ENCODE measurements at regions of chr15 and their contacts with region 1.

Region 1: DNA sequence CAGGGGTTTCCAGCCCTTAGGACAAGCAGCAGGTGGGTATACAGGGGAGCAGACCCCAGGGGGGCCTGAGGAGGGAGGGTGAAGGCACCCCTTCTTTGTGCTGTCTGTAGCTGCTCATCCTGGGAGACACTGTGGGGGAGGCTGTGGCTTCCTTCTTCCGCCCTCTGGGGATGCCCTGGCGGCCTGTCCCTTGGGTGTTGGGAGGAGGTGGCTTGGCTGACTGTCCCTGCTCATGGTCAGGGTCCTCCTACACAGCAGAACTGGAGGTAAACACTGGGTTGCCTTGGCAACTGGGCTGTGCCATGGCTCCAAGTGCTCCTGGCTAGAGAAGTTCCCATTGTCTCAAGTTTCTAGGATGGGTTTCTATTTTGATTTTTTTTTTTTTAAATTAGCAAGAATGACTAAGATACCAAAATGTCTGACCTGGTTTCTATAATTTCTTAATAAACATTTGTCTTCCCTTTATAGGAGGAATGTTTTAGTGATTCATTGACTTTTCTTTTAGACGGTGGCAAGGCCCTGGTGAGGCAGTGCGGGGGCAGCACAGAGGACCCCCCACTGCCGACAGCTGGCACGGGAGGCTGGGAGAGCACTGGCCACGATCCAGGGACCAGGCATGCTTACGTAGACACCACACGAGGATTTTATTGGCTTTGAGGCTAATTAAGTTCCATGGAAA is 12.4 kb downstream of the KLF13 start:
- DNase-seq: peak; percentile 53 to 75
- H3K4me3 ChIP-seq: no peak overlapping the region
- H3K27ac ChIP-seq: peak overlapping the region; percentile 86 to 87
- H3K4me1 ChIP-seq: peaks cover 12 to 31% of the 10 kb centered on the region in 2 donors
- H3K27me3 ChIP-seq: no peaks in the 10 kb centered on the region
- CTCF ChIP-seq: no peak
- POLR2A ChIP-seq: no peak

Region 2: DNA sequence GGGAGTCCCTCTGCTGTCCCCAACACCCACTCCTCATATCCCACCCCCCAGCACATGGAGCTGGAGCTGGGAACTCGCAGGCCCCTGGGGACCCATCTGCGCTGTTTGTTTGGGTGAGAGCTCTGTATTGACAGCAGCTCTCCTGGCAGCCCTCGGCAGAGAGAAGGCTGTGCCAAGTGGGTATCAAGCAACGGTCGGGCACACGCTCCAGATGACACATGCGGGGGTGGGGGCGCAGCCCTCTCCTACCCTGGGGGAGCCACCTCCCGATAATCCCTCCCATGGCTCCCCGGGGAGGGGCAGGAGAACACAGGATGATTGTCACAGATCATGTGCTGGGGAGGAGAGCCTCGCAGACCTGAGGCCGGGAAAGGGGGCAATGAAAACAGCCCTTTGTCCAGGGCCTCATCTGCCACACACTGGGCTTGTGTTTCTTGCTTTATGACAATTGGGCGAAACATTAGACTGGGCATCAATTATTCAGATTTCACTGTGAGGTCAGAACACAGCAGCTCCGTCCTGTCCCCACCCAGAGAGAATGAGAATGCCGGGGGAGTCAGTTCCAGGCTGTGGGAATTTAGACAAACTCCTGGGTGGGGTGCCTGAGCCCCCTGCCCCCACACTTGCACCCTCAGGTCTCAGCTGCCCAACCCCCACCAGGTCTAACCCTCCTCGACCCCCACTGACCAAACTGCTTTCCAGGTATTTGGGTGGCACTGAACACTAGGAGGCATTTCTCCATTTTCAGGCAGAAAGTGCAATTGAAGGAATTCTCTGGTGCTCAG is 58.8 kb before region 1 on chr15:
- intact Hi-C with region 1: no loop called
- DNase-seq: peak in 1 of 2 donors; percentile 8
- H3K4me3 ChIP-seq: no peak overlapping the region
- H3K27ac ChIP-seq: no peak overlapping the region
- H3K4me1 ChIP-seq: no peaks in the 10 kb centered on the region
- H3K27me3 ChIP-seq: no peaks in the 10 kb centered on the region
- CTCF ChIP-seq: no peak
- POLR2A ChIP-seq: no peak

Region 3: DNA sequence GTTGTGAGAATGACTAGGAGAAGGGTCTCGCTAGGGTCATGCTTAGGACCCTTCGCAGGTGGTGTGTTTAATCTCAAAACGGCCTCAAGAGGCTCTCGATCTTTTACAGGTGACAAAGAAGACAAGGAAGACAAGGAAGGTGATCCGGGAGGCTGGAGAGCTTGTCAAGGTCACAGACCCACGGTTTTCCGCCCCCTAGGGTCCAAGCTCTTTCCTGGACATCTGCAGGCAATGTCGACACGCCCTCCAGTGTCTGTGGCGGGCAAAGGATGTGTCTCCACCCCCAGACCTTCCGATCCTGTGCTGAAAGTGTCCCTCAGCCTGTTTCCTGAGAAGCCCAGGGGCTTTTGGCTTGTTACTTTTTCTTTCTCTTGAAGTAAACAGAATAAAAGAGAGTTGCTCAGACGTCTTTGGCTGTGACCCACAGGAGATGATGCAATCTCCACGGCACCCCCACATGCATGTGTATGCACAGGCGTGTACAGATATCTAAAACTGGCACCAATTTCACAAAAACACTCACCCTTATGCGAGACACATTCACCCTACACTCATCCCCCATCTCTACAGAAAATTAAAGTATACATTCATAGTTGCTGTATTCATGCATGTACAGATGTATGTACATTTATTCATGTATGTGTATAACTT is 96.4 kb after region 1 on chr15:
- intact Hi-C with region 1: loop called (anchors 10 kb)
- DNase-seq: peak; percentile 65 to 87
- H3K4me3 ChIP-seq: no peak overlapping the region
- H3K27ac ChIP-seq: peak overlapping the region; percentile 79 to 88
- H3K4me1 ChIP-seq: peaks cover 0 to 9% of the 10 kb centered on the region in 2 donors
- H3K27me3 ChIP-seq: no peaks in the 10 kb centered on the region
- CTCF ChIP-seq: peak; percentile 69 to 75 (median 72)
- POLR2A ChIP-seq: no peak

Region 4: DNA sequence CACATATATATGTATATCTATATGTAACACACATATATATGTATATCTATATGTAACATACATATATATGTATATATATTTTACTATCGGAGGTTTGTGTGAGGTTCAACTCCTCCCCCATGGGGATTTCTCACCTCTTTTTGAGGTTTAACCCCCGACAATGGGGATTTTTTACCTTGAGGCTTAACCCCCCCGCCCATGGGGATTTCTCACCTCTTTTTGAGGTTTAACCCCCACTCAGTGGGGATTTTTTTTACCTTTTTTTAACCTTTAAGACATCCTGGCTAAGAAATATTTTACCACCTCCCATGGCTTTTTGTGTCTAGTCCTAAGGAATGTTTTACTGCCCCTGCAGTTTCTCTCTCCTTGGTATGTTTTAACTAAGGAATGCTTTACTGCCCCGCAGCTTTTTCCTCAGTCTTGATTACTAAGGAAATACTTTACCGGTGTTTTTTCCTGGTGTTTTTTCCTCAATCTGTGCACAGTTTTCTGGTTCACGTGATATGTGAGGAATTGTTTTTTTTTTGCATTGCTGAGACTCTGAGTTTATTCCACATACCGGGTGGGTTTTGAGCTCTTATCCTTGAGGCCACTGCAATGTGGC is 172.8 kb after region 1 on chr15:
- intact Hi-C with region 1: no loop called
- DNase-seq: no peak
- H3K4me3 ChIP-seq: no peak overlapping the region
- H3K27ac ChIP-seq: no peak overlapping the region
- H3K4me1 ChIP-seq: no peaks in the 10 kb centered on the region
- H3K27me3 ChIP-seq: no peaks in the 10 kb centered on the region
- CTCF ChIP-seq: no peak
- POLR2A ChIP-seq: no peak